PC-9 (cell line): ENCODE measurements at regions of chr5 and their contacts with region 1.

Region 1: GRCh38 chr5:76785487-76785886 is 33.3 kb upstream of the F2RL1 start:
- DNase-seq: peak; percentile 76 to 96
- H3K4me3 ChIP-seq: no peak overlapping the region
- H3K27ac ChIP-seq: peak overlapping the region; percentile 67
- H3K4me1 ChIP-seq: peaks cover 46% of the 10 kb centered on the region
- H3K27me3 ChIP-seq: no peaks in the 10 kb centered on the region
- CTCF ChIP-seq: no peak

Region 2: GRCh38 chr5:76747706-76748105 is 37.8 kb before region 1 on chr5:
- CTCF ChIA-PET with region 1: no interaction called
- POLR2A ChIA-PET with region 1: no interaction called
- intact Hi-C with region 1: no loop called
- DNase-seq: no peak
- H3K4me3 ChIP-seq: no peak overlapping the region
- H3K27ac ChIP-seq: no peak overlapping the region
- H3K4me1 ChIP-seq: no peaks in the 10 kb centered on the region
- H3K27me3 ChIP-seq: no peaks in the 10 kb centered on the region
- CTCF ChIP-seq: no peak

Region 3: GRCh38 chr5:76818844-76819831 is 33.7 kb after region 1 on chr5 and contains the start of gene F2RL1:
- CTCF ChIA-PET with region 1: no interaction called
- POLR2A ChIA-PET with region 1: no interaction called
- intact Hi-C with region 1: loop called (anchors 2 kb)
- DNase-seq: peak; percentile 93 to 94
- H3K4me3 ChIP-seq: peak within 1 kb of the TSS; percentile 95
- H3K27ac ChIP-seq: peak within 1 kb of the TSS; percentile 91
- H3K4me1 ChIP-seq: peaks cover 73% of the 10 kb centered on the region
- H3K27me3 ChIP-seq: no peaks in the 10 kb centered on the region
- CTCF ChIP-seq: 0 out of 2 replicates have a peak, but pooled peaks have one; percentile 3
- total RNA-seq, gene F2RL1: 34.5 and 34.6 TPM in 2 replicates

Region 4: DNA sequence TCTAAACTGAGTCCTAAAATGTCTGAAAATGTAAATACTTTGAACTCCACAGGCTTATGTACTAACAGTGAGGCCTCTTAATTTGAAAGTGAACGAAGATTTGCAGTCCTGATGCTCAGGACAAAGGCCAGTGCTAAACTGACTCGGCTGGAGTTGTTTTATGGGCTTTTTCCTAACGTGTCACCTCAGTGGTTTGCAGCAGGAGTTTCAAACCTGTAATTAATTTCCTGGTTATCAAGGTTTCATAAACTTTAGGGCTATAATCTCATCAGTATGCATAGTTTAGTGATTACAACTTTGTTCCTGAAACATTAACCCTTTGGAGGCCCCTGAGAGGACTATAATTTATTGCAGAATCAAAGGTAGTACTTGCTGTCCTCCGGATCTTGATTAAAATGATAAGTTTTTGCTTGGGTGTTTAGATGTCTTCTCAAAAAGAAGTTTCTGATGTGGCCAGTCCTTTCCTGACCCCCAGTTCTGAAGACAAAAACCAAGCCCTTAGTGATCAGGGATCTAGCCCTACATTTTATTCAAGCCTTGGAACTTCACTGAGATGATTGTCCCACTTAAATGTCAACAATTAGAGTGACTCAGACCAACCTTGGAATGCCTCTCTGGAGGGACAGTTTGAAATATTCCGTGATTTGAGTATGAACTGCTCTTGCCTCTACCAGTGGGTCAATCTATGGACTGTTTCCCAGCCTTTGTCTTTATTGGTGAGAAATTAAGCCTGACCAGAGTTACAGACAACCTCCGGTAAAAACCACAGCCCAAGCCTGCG is 53.2 kb after region 1 on chr5:
- CTCF ChIA-PET with region 1: no interaction called
- POLR2A ChIA-PET with region 1: no interaction called
- intact Hi-C with region 1: loop called (anchors 2 kb)
- DNase-seq: peak; percentile 45 to 91
- H3K4me3 ChIP-seq: no peak overlapping the region; the same call in 1 of the 2 replicates
- H3K27ac ChIP-seq: peak overlapping the region; percentile 91
- H3K4me1 ChIP-seq: peaks cover 57% of the 10 kb centered on the region
- H3K27me3 ChIP-seq: no peaks in the 10 kb centered on the region
- CTCF ChIP-seq: no peak

Region 5: GRCh38 chr5:77101298-77101697 is 315.8 kb after region 1 on chr5:
- CTCF ChIA-PET with region 1: no interaction called
- POLR2A ChIA-PET with region 1: interaction called, 22 read pairs
- intact Hi-C with region 1: no loop called
- DNase-seq: no peak
- H3K4me3 ChIP-seq: no peak overlapping the region
- H3K27ac ChIP-seq: no peak overlapping the region
- H3K4me1 ChIP-seq: no peaks in the 10 kb centered on the region
- H3K27me3 ChIP-seq: no peaks in the 10 kb centered on the region
- CTCF ChIP-seq: no peak

Region 6: GRCh38 chr5:77806213-77806843 is 1020.8 kb after region 1 on chr5:
- CTCF ChIA-PET with region 1: no interaction called
- POLR2A ChIA-PET with region 1: no interaction called
- intact Hi-C with region 1: no loop called
- DNase-seq: no peak
- H3K4me3 ChIP-seq: no peak overlapping the region
- H3K27ac ChIP-seq: no peak overlapping the region
- H3K4me1 ChIP-seq: no peaks in the 10 kb centered on the region
- H3K27me3 ChIP-seq: no peaks in the 10 kb centered on the region
- CTCF ChIP-seq: no peak